PC-9 (cell line): ENCODE measurements at regions of chr17 and their contacts with region 1.

Region 1: DNA sequence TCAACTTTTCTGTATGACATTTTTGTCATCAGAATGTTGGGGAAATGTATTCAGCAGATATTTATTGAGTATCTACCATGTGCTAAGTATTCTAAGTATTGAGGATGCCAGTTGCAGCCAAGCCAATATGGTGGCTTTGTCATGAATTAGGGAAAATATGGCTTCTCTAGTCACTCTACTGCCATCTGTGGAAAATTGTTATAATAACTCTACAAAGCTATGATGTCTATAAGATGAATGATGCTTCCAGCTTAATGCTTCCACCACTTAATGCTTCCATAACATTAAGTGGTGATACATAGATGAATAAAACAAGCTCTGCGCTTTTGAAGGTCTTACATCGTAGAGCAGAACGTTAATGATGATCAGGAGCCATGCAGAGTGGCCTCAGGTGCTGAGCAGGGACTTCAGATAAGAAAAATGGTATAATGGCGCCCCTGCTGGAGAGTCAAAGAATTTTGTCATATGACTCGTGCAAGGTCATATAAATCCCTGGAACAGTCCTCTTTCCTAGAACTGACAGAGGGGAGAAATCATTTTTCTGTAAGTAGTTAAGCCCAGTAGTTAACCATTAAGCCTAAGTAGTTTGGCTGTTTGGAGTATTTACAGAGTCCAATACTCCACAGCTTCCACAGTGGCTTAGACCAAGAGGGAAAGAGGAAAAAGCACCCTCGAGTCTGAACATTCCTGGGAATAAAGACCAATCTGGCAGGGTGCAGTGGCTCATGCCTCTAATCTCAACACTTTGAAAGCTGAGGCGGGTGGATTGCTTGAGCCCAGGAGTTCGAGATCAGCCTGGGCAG is 2.7 kb upstream of the TMIGD1 start:
- DNase-seq: peak; percentile 41 to 45
- H3K4me3 ChIP-seq: no peak overlapping the region
- H3K27ac ChIP-seq: no peak overlapping the region
- H3K4me1 ChIP-seq: peaks cover 25% of the 10 kb centered on the region
- H3K27me3 ChIP-seq: no peaks in the 10 kb centered on the region
- CTCF ChIP-seq: peak; percentile 96

Region 2: GRCh38 chr17:30196504-30196903 is 140.1 kb before region 1 on chr17:
- CTCF ChIA-PET with region 1: interaction called, 10 read pairs
- POLR2A ChIA-PET with region 1: no interaction called
- intact Hi-C with region 1: no loop called
- DNase-seq: no peak
- H3K4me3 ChIP-seq: no peak overlapping the region
- H3K27ac ChIP-seq: no peak overlapping the region
- H3K4me1 ChIP-seq: no peaks in the 10 kb centered on the region
- H3K27me3 ChIP-seq: no peaks in the 10 kb centered on the region
- CTCF ChIP-seq: no peak